ENCODE measurements at regions of chr3 and their contacts with region 1.

Region 1: GRCh38 chr3:52154117-52155094 is at the start of gene POC1A:
- DNase-seq: peak; percentile 97 to 99 (median 97)
- H3K4me3 ChIP-seq: peak within 1 kb of the TSS; percentile 55 to 88 (median 71)
- H3K4me3 Mint-ChIP-seq: peak within 1 kb of the TSS; percentile 91 to 99
- H3K27ac ChIP-seq: peak within 1 kb of the TSS; percentile 85 to 88
- H3K27ac Mint-ChIP-seq: peak within 1 kb of the TSS; percentile 97 to 100 (median 98)
- H3K4me1 ChIP-seq: peaks cover 17 to 19% of the 10 kb centered on the region in 2 donors
- H3K4me1 Mint-ChIP-seq: peaks cover 17% of the 10 kb centered on the region
- H3K27me3 ChIP-seq: no peaks in the 10 kb centered on the region
- H3K27me3 Mint-ChIP-seq: peaks cover 0 to 1% (median 0%) of the 10 kb centered on the region in 3 donors
- CTCF ChIP-seq: peak; percentile 15
- polyA plus RNA-seq, gene POC1A: 1.2 to 2.0 (median 1.5) TPM

Region 2: GRCh38 chr3:52046186-52046913 is 108.1 kb before region 1 on chr3:
- intact Hi-C with region 1: no loop called
- DNase-seq: no peak
- H3K4me3 ChIP-seq: no peak overlapping the region
- H3K4me3 Mint-ChIP-seq: no peak overlapping the region
- H3K27ac ChIP-seq: no peak overlapping the region
- H3K27ac Mint-ChIP-seq: peak overlapping the region in 4 of 7 donors; percentile 15 to 63 (median 44)
- H3K4me1 ChIP-seq: peaks cover 0 to 7% of the 10 kb centered on the region in 2 donors
- H3K4me1 Mint-ChIP-seq: peaks cover 8% of the 10 kb centered on the region
- H3K27me3 ChIP-seq: no peaks in the 10 kb centered on the region
- H3K27me3 Mint-ChIP-seq: peaks cover 0 to 5% (median 2%) of the 10 kb centered on the region in 3 donors
- CTCF ChIP-seq: no peak

Region 3: GRCh38 chr3:52197842-52198668 is 43.6 kb after region 1 on chr3 and contains the start of gene ALAS1:
- intact Hi-C with region 1: loop called in 1 of 2 experiments (anchors 5 kb)
- DNase-seq: peak; percentile 92 to 93 (median 93)
- H3K4me3 ChIP-seq: peak within 1 kb of the TSS; percentile 66 to 86 (median 80)
- H3K4me3 Mint-ChIP-seq: peak within 1 kb of the TSS; percentile 97 to 98
- H3K27ac ChIP-seq: peak within 1 kb of the TSS; percentile 76 to 83
- H3K27ac Mint-ChIP-seq: peak within 1 kb of the TSS; percentile 92 to 98 (median 94)
- H3K4me1 ChIP-seq: peaks cover 73 to 78% of the 10 kb centered on the region in 2 donors
- H3K4me1 Mint-ChIP-seq: peaks cover 73% of the 10 kb centered on the region
- H3K27me3 ChIP-seq: no peaks in the 10 kb centered on the region
- H3K27me3 Mint-ChIP-seq: peaks cover 0 to under 1% (median 0%) of the 10 kb centered on the region in 3 donors
- CTCF ChIP-seq: no peak
- polyA plus RNA-seq, gene ALAS1: 20.9 to 84.7 (median 38.7) TPM

Region 4: GRCh38 chr3:52210550-52211046 is 56.2 kb after region 1 on chr3:
- intact Hi-C with region 1: loop called in 1 of 2 experiments (anchors 5 kb)
- DNase-seq: peak; percentile 89 to 94 (median 93)
- H3K4me3 ChIP-seq: peak overlapping the region in 1 of 3 experiments; percentile 48
- H3K4me3 Mint-ChIP-seq: peak overlapping the region in 1 of 2 donors; percentile 35
- H3K27ac ChIP-seq: peak overlapping the region; percentile 60 to 77
- H3K27ac Mint-ChIP-seq: peak overlapping the region; percentile 83 to 95 (median 91)
- H3K4me1 ChIP-seq: peaks cover 23 to 25% of the 10 kb centered on the region in 2 donors
- H3K4me1 Mint-ChIP-seq: peaks cover 35% of the 10 kb centered on the region
- H3K27me3 ChIP-seq: no peaks in the 10 kb centered on the region
- H3K27me3 Mint-ChIP-seq: peaks cover 0 to 3% (median 0%) of the 10 kb centered on the region in 3 donors
- CTCF ChIP-seq: no peak

Measured in CD14-positive monocyte (primary cell).